CD8-positive, alpha-beta memory T cell (primary cell): ENCODE measurements at regions of chr13 and their contacts with region 1.

Region 1: DNA sequence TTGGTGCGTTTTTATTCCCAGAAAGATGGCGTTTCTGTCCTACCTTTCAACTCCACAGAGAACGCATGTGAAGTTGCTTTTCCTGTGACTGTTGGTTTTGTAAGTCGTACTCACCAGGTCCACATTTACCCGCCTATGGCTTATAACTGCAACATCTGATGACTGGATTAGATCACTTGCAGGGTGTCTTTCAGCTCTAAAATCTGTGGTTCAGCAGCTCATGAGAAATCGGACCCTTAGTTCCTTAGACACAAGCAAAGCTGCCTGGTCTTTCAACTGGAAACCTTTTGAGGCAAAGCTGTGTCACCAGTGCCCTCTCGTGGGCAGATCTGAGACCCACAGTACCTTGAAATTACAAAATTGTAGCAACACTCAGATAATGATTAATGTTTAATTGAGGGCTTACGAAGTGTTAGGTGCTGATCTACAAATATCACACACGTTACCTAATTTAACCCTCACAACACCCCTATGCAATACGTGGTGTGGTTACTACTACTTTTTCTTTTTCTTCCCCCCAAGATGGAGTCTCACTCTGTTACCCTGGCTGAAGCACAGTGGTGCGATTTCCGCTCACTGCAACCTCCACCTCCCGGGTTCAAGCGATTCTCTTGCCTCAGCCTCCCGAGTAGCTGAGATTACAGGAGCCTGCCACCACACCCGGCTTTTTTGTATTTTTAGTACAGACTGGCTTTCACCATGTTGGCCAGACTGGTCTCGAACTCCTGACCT is 65.4 kb downstream of the RUBCNL start:
- DNase-seq: peak; percentile 54 to 80 (median 68)
- H3K4me3 ChIP-seq: peak overlapping the region; percentile 29
- H3K4me3 Mint-ChIP-seq: peak overlapping the region; percentile 48 to 86 (median 77)
- H3K27ac ChIP-seq: no peak overlapping the region
- H3K27ac Mint-ChIP-seq: peak overlapping the region; percentile 79 to 99 (median 94)
- H3K4me1 ChIP-seq: peaks cover 12% of the 10 kb centered on the region
- H3K4me1 Mint-ChIP-seq: peaks cover 25 to 34% (median 29%) of the 10 kb centered on the region in 3 donors
- H3K27me3 ChIP-seq: no peaks in the 10 kb centered on the region
- H3K27me3 Mint-ChIP-seq: peaks cover 1 to 5% of the 10 kb centered on the region in 2 donors

Region 2: GRCh38 chr13:46288570-46289259 is 32.9 kb before region 1 on chr13:
- CTCF ChIA-PET with region 1: interaction called, 26 read pairs
- POLR2A ChIA-PET with region 1: interaction called, 3 read pairs
- DNase-seq: peak in 2 of 5 donors; percentile 57 to 65
- H3K4me3 ChIP-seq: no peak overlapping the region
- H3K4me3 Mint-ChIP-seq: no peak overlapping the region
- H3K27ac ChIP-seq: no peak overlapping the region
- H3K27ac Mint-ChIP-seq: peak overlapping the region in 5 of 8 donors; percentile 35 to 79 (median 60)
- H3K4me1 ChIP-seq: peaks cover 3% of the 10 kb centered on the region
- H3K4me1 Mint-ChIP-seq: peaks cover 14 to 20% (median 17%) of the 10 kb centered on the region in 3 donors
- H3K27me3 ChIP-seq: no peaks in the 10 kb centered on the region
- H3K27me3 Mint-ChIP-seq: peaks cover 0 to 1% of the 10 kb centered on the region in 2 donors

Region 3: GRCh38 chr13:46295491-46296114 is 26.1 kb before region 1 on chr13:
- CTCF ChIA-PET with region 1: interaction called, 29 read pairs
- POLR2A ChIA-PET with region 1: interaction called, 9 read pairs
- DNase-seq: peak; percentile 59 to 92 (median 88)
- H3K4me3 ChIP-seq: peak overlapping the region; percentile 9
- H3K4me3 Mint-ChIP-seq: peak overlapping the region; percentile 5 to 83 (median 63)
- H3K27ac ChIP-seq: peak overlapping the region; percentile 43
- H3K27ac Mint-ChIP-seq: peak overlapping the region; percentile 82 to 99 (median 96)
- H3K4me1 ChIP-seq: peaks cover 47% of the 10 kb centered on the region
- H3K4me1 Mint-ChIP-seq: peaks cover 50 to 62% (median 61%) of the 10 kb centered on the region in 3 donors
- H3K27me3 ChIP-seq: no peaks in the 10 kb centered on the region
- H3K27me3 Mint-ChIP-seq: peaks cover 0 to 2% of the 10 kb centered on the region in 2 donors

Region 4: GRCh38 chr13:46369506-46370277 is 48.0 kb after region 1 on chr13:
- CTCF ChIA-PET with region 1: no interaction called
- POLR2A ChIA-PET with region 1: no interaction called
- DNase-seq: no peak
- H3K4me3 ChIP-seq: no peak overlapping the region
- H3K4me3 Mint-ChIP-seq: no peak overlapping the region
- H3K27ac ChIP-seq: no peak overlapping the region
- H3K27ac Mint-ChIP-seq: no peak overlapping the region
- H3K4me1 ChIP-seq: no peaks in the 10 kb centered on the region
- H3K4me1 Mint-ChIP-seq: no peaks in the 10 kb centered on the region
- H3K27me3 ChIP-seq: no peaks in the 10 kb centered on the region
- H3K27me3 Mint-ChIP-seq: peaks cover 8 to 14% of the 10 kb centered on the region in 2 donors